ENCODE measurements at regions of chr17 and their contacts with region 1.

Region 1: GRCh38 chr17:48344246-48344645 is 85.8 kb downstream of the SKAP1 start:
- DNase-seq: no peak
- ATAC-seq: no peak

Region 2: GRCh38 chr17:48593840-48594537 is 249.7 kb after region 1 on chr17:
- intact Hi-C with region 1: loop called (anchors 10 kb)
- DNase-seq: peak; percentile 86
- ATAC-seq: peak; percentile 62

Measured in Right ventricle myocardium superior (tissue), 1 donor.